Dendritic cell treated with granulocyte-macrophage colony-stimulating factor and Interleukin-4, amounts not matched to agents 40 ng/mL and 50 ng/mL, for 4 days (primary cell): ENCODE measurements at regions of chr19 and their contacts with region 1.

Region 1: DNA sequence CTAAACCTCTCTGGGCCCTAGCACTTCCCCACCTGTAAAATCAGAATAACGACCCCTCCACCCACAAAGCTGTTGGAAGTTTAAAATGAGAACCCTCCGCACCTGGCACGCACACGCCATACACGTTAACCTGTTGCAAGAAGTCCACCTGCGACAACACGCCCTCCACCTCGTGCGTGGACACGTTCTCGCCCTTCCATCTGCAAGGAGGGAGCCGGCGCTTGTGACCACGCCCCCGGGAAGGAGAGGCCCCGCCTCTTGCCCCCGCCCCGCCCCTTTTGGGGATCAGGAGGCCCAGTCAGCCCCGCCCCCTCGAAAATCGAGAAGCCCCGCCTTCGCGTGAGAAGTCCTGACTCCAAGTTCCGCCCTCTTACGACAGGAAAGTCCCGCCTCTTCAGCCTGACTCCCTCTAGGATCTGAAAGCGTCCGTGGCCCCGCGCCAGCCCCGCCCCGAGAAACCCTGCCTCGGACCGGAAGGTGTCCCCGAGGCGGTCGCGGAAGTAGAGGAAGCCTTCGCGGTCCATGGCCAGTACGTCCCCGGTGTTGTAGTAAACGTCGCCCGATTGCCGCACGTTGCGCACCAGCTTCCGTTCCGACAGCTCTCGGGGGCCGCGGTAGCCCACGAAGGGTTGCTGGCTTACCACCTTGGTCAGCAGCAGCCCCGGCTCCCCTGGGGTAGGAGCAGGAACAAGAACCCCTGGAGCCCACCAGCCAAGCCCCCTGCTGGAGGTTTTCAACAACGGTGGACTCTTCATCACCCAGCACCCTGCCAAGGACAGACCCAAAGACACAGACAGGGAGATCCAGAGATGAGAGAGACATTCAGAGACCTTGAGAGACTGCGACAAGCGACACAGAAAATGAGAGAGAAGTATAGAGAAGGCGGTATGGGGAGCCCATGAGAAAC is 12.5 kb downstream of the SLC27A5 start:
- H3K4me3 Mint-ChIP-seq: peak overlapping the region; percentile 79
- H3K27ac Mint-ChIP-seq: peak overlapping the region; percentile 89
- H3K4me1 Mint-ChIP-seq: peaks cover 18% of the 10 kb centered on the region
- H3K27me3 Mint-ChIP-seq: peaks cover 15% of the 10 kb centered on the region

Region 2: DNA sequence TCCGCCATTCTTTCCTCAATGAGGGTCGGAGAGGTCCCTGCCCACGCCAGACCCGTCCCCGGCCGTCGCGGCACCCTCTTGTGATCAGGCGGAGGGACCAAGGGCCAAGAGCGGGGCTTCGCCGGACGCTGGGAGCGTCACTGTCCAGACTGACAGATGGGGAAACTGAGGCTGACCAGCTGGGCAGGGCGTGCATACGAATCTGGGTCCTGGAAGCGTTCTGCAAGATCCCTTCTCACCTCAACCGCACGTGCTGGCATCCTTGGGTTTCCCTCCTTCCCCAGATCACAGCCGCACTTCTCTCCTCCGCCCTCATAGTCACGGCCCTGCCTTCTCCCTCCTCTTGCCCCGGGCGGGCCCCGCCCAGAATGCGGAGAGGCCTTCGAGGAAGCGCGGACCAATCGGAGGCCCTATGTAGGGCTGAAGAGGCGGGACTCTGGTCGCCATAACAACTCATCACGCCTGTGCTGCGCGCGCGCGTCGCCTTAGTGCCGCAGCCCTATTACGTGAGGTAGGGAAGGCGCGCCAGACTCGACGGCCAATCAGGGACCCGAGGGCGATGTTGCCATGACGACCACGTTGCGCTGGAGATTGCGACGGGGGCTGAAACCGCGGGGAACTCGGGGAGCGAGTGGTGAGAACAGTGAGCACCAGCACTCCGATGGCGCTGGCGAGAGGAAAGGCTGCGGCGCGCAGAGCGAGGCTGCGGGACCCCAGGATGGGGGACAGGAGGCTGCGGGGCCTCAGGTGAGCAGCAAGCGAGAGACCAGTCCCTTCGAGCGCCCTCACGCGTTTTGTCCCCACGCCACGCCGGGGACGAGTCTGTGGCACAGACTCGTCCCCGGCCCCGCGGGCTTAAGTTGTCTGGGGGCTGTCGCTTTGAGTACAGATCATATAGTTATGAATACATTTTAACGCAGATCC is 98.1 kb before region 1 on chr19:
- intact Hi-C with region 1: loop called (anchors 1 kb)
- H3K4me3 Mint-ChIP-seq: peak overlapping the region; percentile 85
- H3K27ac Mint-ChIP-seq: peak overlapping the region; percentile 80
- H3K4me1 Mint-ChIP-seq: peaks cover 28% of the 10 kb centered on the region
- H3K27me3 Mint-ChIP-seq: peaks cover 31% of the 10 kb centered on the region

Region 3: GRCh38 chr19:58451358-58452101 is 47.7 kb before region 1 on chr19 and contains the start of gene ZNF324B:
- intact Hi-C with region 1: loop called (anchors 1 kb)
- H3K4me3 Mint-ChIP-seq: peak within 1 kb of the TSS; percentile 85
- H3K27ac Mint-ChIP-seq: peak within 1 kb of the TSS; percentile 77
- H3K4me1 Mint-ChIP-seq: peaks cover 28% of the 10 kb centered on the region
- H3K27me3 Mint-ChIP-seq: peaks cover 19% of the 10 kb centered on the region

Region 4: GRCh38 chr19:58538257-58539168 is 39.2 kb after region 1 on chr19:
- intact Hi-C with region 1: no loop called
- H3K4me3 Mint-ChIP-seq: peak overlapping the region; percentile 61
- H3K27ac Mint-ChIP-seq: peak overlapping the region; percentile 63
- H3K4me1 Mint-ChIP-seq: peaks cover 26% of the 10 kb centered on the region
- H3K27me3 Mint-ChIP-seq: peaks cover 22% of the 10 kb centered on the region

Region 5: DNA sequence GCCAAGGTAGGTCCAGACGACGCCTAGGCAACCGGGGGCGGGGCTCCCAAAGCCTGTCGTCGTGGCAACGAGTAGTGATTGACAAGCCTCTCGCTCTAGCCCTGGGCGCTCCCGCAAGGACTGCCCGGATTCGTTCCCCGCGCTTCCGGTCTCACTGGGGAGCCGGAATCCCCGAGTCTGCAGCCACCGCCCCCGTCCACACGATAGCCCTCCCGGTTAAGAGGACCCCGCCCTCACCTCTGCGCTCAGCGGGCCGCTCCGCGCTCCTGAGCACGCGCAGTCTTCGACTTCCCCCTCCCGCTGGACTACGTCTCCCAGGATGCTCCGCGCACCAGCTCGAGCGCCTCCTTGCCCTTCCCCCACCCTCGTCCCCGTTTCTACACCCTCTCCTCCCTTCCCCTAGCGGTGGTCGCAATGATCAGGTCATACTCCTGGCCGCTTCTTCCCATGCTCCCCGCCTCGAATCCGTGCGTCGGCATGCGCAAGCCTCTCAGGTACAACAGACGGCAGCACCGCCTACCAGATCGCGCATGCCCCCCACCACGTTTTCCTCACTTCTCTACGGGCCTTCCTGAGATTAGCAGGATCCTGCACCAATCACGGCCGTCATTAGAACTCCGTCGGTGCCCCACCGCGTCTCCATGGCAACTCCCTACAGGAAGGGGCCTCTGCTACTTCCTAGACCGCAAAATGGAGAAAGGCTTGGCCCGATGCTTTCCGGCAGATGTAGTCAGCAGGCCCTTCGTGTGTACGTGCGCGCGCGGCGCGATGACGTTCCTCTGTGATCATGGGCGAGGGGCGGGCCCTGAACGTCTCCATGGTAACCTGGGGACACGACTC is 73.8 kb after region 1 on chr19 and contains the start of gene MZF1:
- intact Hi-C with region 1: no loop called
- H3K4me3 Mint-ChIP-seq: peak within 1 kb of the TSS; percentile 85
- H3K27ac Mint-ChIP-seq: peak within 1 kb of the TSS; percentile 98
- H3K4me1 Mint-ChIP-seq: peaks cover 47% of the 10 kb centered on the region
- H3K27me3 Mint-ChIP-seq: no peaks in the 10 kb centered on the region